ENCODE measurements at regions of chrX and their contacts with region 1.

Region 1: DNA sequence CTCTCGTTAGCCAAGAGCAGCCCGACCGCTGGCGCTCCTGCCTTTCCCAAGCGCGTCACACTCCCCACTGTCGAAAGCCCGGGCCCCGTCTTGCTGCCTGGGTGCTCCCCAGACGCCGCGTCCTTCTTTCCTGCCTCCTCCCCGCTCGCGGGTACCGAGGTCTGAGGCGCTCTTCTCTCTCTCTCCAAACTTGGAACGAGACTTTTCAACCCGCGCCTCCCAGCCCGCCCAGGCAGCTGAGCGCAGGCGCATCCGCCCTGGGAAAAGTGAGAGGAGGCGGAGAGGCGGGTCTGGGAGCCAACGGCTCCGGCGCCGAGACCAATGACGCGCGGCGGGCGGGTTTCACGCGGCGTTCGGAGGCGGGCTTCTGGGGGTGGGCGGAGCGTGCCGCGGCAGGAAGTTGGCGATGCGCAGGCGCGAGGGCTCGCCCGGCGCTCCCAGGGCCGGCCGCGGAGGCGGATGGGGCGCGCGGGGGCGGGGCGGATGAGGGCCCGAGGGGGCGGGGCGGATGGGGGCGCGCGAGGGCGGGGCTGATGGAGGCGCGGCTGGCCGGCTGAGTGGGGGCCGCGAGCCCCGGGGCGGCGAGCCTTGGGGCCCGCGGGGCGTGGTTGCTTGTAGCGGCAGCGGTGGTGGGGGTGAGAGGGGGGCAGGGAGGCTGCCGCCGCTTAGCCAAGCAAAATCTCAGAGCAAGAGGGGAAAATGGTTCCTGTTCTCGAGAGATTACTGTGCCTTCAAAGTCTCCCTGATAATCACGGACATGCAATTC is at the start of gene RBBP7:
- DNase-seq: peak; percentile 94
- ATAC-seq: peak; percentile 83
- H3K4me3 Mint-ChIP-seq: peak within 1 kb of the TSS; percentile 94
- H3K27ac Mint-ChIP-seq: peak within 1 kb of the TSS; percentile 98
- H3K4me1 Mint-ChIP-seq: peaks cover 17% of the 10 kb centered on the region
- H3K27me3 Mint-ChIP-seq: no peaks in the 10 kb centered on the region
- total RNA-seq, gene RBBP7: 149 to 150 TPM

Region 2: GRCh38 chrX:16882702-16883486 is 12.6 kb after region 1 on chrX:
- POLR2A ChIA-PET with region 1: interaction called, 10 read pairs
- DNase-seq: peak; percentile 60
- ATAC-seq: peak; percentile 77
- H3K4me3 Mint-ChIP-seq: peak overlapping the region; percentile 73
- H3K27ac Mint-ChIP-seq: no peak overlapping the region
- H3K4me1 Mint-ChIP-seq: peaks cover 3% of the 10 kb centered on the region
- H3K27me3 Mint-ChIP-seq: peaks cover 2% of the 10 kb centered on the region

Region 3: DNA sequence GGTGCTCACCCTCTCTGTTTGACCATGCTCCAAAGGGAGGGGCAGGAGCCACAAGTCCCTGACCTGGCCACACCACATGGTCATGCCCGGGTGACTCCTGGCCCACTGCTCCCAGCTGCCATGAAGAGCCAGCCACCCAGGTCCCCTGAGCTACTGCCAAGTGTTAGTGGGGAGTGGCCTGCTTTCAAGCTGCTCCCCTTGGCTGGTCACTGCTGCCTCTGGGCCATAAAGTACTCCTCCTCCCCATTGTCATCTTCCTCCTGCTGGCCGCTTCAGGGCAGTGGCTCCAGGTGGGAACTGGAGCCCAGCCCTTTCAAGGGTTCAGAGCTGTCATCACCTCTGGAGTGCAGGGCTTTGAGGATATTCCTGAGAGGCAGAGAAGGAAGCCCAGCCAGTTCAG is 27.2 kb after region 1 on chrX:
- POLR2A ChIA-PET with region 1: no interaction called
- DNase-seq: no peak
- ATAC-seq: no peak
- H3K4me3 Mint-ChIP-seq: no peak overlapping the region
- H3K27ac Mint-ChIP-seq: no peak overlapping the region
- H3K4me1 Mint-ChIP-seq: peaks cover 5% of the 10 kb centered on the region
- H3K27me3 Mint-ChIP-seq: peaks cover 3% of the 10 kb centered on the region